Common myeloid progenitor, CD34-positive (primary cell): ENCODE measurements at regions of chr16 and their contacts with region 1.

Region 1: DNA sequence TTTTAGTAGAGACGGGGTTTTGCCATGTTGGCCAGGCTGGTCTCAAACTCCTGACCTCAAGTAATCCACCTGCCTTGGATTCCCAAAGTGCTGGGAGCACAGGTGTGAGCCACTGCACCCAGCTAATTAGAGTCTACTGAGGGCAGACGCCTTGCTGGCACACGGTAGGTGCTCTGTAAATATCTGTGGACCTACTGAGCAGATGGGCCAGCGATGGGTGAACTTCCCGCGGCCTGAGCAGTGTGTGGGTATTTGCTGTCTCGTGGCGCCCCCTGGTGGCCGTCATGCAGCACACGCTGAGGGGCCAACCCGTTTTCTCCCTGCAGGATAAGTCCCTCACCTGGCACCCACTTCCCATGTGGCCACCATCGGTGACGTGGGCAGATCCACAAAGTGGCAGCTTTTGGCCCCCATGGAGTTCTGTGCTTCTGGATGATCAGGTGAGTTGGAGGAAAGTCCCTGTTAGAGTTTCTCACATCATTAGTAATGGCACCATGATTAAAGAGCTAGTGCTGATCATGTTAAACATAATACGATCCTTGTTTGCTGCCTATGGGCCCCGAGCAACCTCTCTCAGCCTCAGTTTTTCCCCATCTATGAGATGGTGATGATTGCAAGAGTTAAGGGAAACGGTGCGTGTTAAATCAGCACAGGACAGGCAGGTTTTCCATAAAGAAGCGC is 40.7 kb downstream of the ZDHHC7 start:
- DNase-seq: peak; percentile 80 to 88 (median 87)
- H3K4me3 ChIP-seq: no peak overlapping the region
- H3K27ac ChIP-seq: no peak overlapping the region
- H3K4me1 ChIP-seq: peaks cover 0 to 8% (median 2%) of the 10 kb centered on the region in 4 experiments
- H3K27me3 ChIP-seq: peaks cover 0 to 9% (median 2%) of the 10 kb centered on the region in 5 experiments

Region 2: GRCh38 chr16:84055366-84055765 is 915.2 kb before region 1 on chr16:
- CTCF ChIA-PET with region 1: no interaction called
- POLR2A ChIA-PET with region 1: no interaction called
- DNase-seq: no peak
- H3K4me3 ChIP-seq: no peak overlapping the region
- H3K27ac ChIP-seq: no peak overlapping the region
- H3K4me1 ChIP-seq: no peaks in the 10 kb centered on the region
- H3K27me3 ChIP-seq: no peaks in the 10 kb centered on the region

Region 3: DNA sequence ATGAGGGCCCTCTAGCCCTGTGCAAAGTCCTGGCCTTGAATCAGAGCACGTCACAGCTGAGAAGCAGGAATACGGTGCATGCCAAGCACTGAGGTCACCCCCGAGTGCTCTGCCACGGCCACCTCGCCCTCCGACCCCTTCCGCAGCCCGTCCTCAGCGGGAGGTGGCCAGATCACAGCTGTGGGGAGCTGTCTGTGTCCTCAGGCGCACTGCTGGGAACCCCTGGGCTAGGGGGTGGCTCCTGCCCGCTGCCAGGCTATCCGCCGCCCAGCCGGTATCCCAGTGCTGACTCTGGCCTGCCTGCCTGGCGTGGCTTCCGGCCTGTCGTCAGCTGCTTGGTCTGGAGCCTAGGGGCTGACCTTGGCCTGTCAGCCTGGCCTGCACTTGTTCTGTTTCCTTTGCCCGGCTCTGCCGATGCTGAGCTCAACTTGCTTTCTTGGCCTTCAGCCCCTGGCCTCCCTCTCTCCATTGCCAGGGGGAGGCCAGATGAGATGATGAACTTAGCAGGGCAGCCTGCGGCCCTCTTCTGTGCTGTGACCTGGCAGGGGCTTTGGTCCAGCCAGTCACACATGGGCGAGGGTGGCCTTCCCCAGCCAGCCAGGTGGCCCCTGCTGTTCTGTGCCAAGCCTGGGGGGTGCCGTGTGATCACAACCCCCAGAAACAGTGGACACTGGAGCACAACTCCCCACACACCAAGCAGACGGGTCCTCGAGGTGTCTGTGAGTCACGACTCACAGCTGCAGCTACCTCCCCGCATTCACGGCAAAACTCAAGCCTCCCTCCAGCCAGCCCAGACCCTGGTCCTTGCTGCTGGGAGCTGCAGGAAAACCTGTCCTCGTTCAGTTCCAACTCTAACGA is 36.6 kb before region 1 on chr16:
- CTCF ChIA-PET with region 1: interaction called, 207 read pairs
- POLR2A ChIA-PET with region 1: no interaction called
- DNase-seq: no peak
- H3K4me3 ChIP-seq: no peak overlapping the region
- H3K27ac ChIP-seq: no peak overlapping the region
- H3K4me1 ChIP-seq: no peaks in the 10 kb centered on the region
- H3K27me3 ChIP-seq: peaks cover 0 to 31% (median 0%) of the 10 kb centered on the region in 5 experiments

Region 4: GRCh38 chr16:84952335-84953189 is 18.0 kb before region 1 on chr16:
- CTCF ChIA-PET with region 1: interaction called, 68 read pairs
- POLR2A ChIA-PET with region 1: no interaction called
- DNase-seq: peak; percentile 77 to 87 (median 81)
- H3K4me3 ChIP-seq: peak overlapping the region in 2 of 7 experiments; percentile 1 to 45
- H3K27ac ChIP-seq: peak overlapping the region in 1 of 2 experiments; percentile 27
- H3K4me1 ChIP-seq: peaks cover 11 to 41% (median 34%) of the 10 kb centered on the region in 4 experiments
- H3K27me3 ChIP-seq: peaks cover 0 to 20% (median 0%) of the 10 kb centered on the region in 5 experiments

Region 5: DNA sequence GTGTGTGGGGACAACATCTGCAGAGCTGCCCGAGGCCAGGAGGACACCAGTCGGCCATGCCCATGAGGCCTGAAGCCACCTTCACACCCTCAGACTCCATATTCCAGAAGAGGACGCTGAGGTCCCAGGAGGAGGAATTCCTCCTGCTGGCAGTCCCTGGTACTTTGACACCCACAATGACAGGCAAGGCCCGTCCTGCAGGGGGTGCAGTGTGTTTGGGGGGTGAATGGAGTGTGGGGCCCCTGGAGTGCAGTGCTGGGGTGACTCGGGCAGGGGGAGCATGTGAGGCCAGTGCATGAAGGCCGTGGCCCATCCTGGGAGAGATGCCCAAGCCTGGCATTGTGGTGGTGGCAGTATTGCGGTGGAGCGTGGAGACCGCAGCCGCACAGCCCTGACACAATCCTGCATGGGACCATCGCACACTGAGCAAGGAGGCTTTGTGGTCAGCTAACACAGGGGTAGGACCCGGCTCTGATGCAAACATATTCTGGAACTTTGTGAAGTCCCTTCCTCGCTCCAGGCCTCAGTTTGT is 11.5 kb before region 1 on chr16:
- CTCF ChIA-PET with region 1: interaction called, 68 read pairs
- POLR2A ChIA-PET with region 1: no interaction called
- DNase-seq: peak; percentile 37 to 49 (median 44)
- H3K4me3 ChIP-seq: no peak overlapping the region
- H3K27ac ChIP-seq: no peak overlapping the region
- H3K4me1 ChIP-seq: peaks cover 0 to 15% (median 2%) of the 10 kb centered on the region in 4 experiments
- H3K27me3 ChIP-seq: peaks cover 0 to 8% (median 0%) of the 10 kb centered on the region in 5 experiments

Region 6: GRCh38 chr16:84982434-84982833 is 11.8 kb after region 1 on chr16:
- CTCF ChIA-PET with region 1: interaction called, 13 read pairs
- POLR2A ChIA-PET with region 1: no interaction called
- DNase-seq: peak; percentile 39 to 80 (median 77)
- H3K4me3 ChIP-seq: no peak overlapping the region
- H3K27ac ChIP-seq: no peak overlapping the region
- H3K4me1 ChIP-seq: peaks cover 0 to 14% (median 6%) of the 10 kb centered on the region in 4 experiments
- H3K27me3 ChIP-seq: no peaks in the 10 kb centered on the region

Region 7: GRCh38 chr16:85010931-85011845 is 40.6 kb after region 1 on chr16 and contains the start of gene ZDHHC7:
- CTCF ChIA-PET with region 1: no interaction called
- POLR2A ChIA-PET with region 1: no interaction called
- DNase-seq: peak; percentile 90 to 94 (median 92)
- H3K4me3 ChIP-seq: peak within 1 kb of the TSS; percentile 83 to 95 (median 89)
- H3K27ac ChIP-seq: peak within 1 kb of the TSS; percentile 96 to 99
- H3K4me1 ChIP-seq: peaks cover 4 to 28% (median 16%) of the 10 kb centered on the region in 4 experiments
- H3K27me3 ChIP-seq: no peaks in the 10 kb centered on the region

Region 8: GRCh38 chr16:85114909-85115567 is 144.5 kb after region 1 on chr16:
- CTCF ChIA-PET with region 1: no interaction called
- POLR2A ChIA-PET with region 1: no interaction called
- DNase-seq: peak; percentile 66 to 73 (median 72)
- H3K4me3 ChIP-seq: peak overlapping the region in 5 of 7 experiments; percentile 19 to 58 (median 35)
- H3K27ac ChIP-seq: peak overlapping the region in 1 of 2 experiments; percentile 34
- H3K4me1 ChIP-seq: peaks cover 0 to 4% (median 2%) of the 10 kb centered on the region in 4 experiments
- H3K27me3 ChIP-seq: no peaks in the 10 kb centered on the region